Astrocyte of the cerebellum (primary cell): ENCODE measurements at regions of chr21 and their contacts with region 1.

Region 1: GRCh38 chr21:32015461-32016139 is 142.8 kb downstream of the HUNK start:
- DNase-seq: no peak
- H3K4me3 ChIP-seq: no peak overlapping the region
- CTCF ChIP-seq: no peak

Region 2: GRCh38 chr21:31957631-31958030 is 58.0 kb before region 1 on chr21:
- in situ Hi-C with region 1: loop called (anchors 10 kb)
- DNase-seq: no peak
- H3K4me3 ChIP-seq: no peak overlapping the region
- CTCF ChIP-seq: no peak

Region 3: GRCh38 chr21:32392880-32393676 is 377.5 kb after region 1 on chr21 and contains the start of gene URB1:
- in situ Hi-C with region 1: no loop called
- DNase-seq: no peak
- H3K4me3 ChIP-seq: peak within 1 kb of the TSS; percentile 95
- CTCF ChIP-seq: no peak